ENCODE measurements at regions of chr1 and their contacts with region 1.

Region 1: DNA sequence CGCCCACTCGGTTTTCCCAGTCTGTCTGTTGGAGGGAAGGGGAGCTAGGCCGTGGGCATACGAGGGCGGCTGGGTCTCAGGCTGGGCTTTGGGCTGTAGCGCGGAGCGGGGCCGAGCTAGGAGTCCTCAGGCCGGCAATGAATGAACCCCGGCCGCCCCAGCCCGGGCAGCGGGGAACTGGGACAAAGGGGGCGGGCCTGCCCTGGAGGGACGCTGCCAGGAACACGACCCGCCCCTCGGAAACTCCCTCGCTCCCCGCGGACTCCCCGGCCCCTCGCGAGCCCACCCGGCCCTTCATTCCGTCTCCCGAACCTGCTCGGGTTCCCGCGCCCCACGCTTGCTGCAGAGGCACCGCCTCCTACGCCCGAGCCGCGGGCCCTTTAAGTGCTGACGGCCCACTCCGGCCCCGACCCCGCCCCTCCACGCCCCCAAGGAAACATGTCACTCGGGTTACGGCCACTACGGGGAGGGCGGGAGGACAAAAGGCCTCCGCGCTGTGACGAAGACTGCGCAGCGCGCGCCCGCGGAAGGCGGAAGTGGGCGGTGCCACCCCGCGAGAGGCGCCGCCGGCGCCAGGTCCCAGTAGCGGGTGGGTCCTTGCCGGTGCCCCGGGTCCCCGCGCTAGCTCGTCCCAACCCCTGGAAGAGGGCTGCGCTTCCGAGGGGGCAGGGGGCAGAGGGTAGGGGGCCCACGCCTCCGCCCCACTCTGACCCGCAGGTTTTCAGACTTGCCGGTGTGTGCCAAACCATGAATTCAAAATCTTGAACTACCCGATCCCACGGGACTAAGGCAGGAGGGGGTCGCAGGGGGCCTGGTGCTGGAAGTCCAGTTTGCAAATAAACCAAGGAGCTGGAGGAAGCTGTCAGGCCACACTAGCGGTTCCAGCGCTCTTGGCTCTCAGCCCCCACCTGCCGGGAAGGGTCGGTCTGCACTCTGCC is at the start of gene GALE:
- DNase-seq: peak; percentile 98 to 99 (median 99)
- ATAC-seq: peak; percentile 86
- H3K4me3 ChIP-seq: peak within 1 kb of the TSS; percentile 90
- H3K4me1 ChIP-seq: peaks cover 27% of the 10 kb centered on the region
- CTCF ChIP-seq: no peak
- total RNA-seq, gene GALE: 55.7 to 156 (median 127) TPM

Region 2: GRCh38 chr1:23908493-23909341 is 108.0 kb after region 1 on chr1:
- intact Hi-C with region 1: no loop called
- DNase-seq: peak in 1 of 3 donors; percentile 73
- ATAC-seq: peak; percentile 48
- H3K4me3 ChIP-seq: no peak overlapping the region
- H3K4me1 ChIP-seq: peaks cover 4% of the 10 kb centered on the region
- CTCF ChIP-seq: no peak

Region 3: GRCh38 chr1:24027838-24028468 is 227.3 kb after region 1 on chr1:
- intact Hi-C with region 1: loop called in 1 of 2 experiments (anchors 10 kb)
- DNase-seq: no peak
- ATAC-seq: peak; percentile 87
- H3K4me3 ChIP-seq: no peak overlapping the region
- H3K4me1 ChIP-seq: peaks cover 3% of the 10 kb centered on the region
- CTCF ChIP-seq: peak; percentile 34